Spleen (tissue), 13 donors: ENCODE measurements at regions of chr12 and their contacts with region 1.

Region 1: GRCh38 chr12:56189176-56189917 is at the start of gene SMARCC2:
- DNase-seq: peak; percentile 97
- H3K4me3 ChIP-seq: peak within 1 kb of the TSS; percentile 57 to 94 (median 84)
- H3K27ac ChIP-seq: peak within 1 kb of the TSS; percentile 85 to 96 (median 94)
- H3K4me1 ChIP-seq: peaks cover 22 to 58% (median 35%) of the 10 kb centered on the region in 6 donors
- H3K27me3 ChIP-seq: no peaks in the 10 kb centered on the region
- CTCF ChIP-seq: peak; percentile 19 to 92 (median 80)
- POLR2A ChIP-seq: no peak
- total RNA-seq, gene SMARCC2: 73.7 to 121 (median 101) TPM

Region 2: DNA sequence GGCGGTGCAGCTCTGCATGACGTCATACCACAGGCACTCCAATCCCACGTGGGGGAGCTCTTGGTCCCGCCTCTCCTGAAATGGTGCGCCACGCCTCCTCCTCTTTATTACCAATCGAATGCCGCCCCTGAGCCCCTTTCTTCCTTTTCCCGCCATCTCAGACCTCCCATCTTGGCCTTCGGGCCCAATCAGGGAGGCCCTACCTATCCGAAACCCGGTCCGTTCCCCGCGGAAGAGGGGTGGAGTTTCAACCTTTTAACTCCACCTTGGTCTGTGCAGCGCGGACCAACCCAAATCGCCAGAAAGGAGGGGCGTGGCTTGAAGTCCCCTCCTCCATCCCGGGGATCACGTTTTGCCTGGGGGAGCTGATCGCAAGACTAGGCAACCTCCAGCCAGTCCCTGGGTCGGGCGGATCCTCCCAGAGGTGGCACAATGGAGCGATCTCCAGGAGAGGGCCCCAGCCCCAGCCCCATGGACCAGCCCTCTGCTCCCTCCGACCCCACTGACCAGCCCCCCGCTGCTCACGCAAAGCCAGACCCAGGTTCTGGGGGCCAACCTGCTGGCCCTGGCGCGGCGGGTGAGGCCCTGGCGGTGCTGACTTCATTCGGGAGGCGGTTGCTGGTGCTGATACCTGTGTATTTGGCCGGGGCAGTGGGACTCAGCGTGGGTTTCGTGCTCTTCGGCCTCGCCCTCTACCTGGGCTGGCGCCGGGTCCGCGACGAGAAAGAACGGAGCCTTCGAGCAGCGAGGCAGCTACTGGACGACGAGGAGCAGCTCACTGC is 61.3 kb before region 1 on chr12 and contains the start of gene ESYT1:
- intact Hi-C with region 1: loop called (anchors 2 kb)
- DNase-seq: peak; percentile 99
- H3K4me3 ChIP-seq: peak within 1 kb of the TSS; percentile 50 to 94 (median 79)
- H3K27ac ChIP-seq: peak within 1 kb of the TSS; percentile 82 to 94 (median 90)
- H3K4me1 ChIP-seq: peaks cover 37 to 92% (median 61%) of the 10 kb centered on the region in 6 donors
- H3K27me3 ChIP-seq: no peaks in the 10 kb centered on the region
- CTCF ChIP-seq: peak in 4 of 11 experiments; percentile 6 to 57 (median 32)
- POLR2A ChIP-seq: peak in 2 of 3 donors; percentile 56 to 95
- total RNA-seq, gene ESYT1: 89.0 to 112 (median 107) TPM

Region 3: DNA sequence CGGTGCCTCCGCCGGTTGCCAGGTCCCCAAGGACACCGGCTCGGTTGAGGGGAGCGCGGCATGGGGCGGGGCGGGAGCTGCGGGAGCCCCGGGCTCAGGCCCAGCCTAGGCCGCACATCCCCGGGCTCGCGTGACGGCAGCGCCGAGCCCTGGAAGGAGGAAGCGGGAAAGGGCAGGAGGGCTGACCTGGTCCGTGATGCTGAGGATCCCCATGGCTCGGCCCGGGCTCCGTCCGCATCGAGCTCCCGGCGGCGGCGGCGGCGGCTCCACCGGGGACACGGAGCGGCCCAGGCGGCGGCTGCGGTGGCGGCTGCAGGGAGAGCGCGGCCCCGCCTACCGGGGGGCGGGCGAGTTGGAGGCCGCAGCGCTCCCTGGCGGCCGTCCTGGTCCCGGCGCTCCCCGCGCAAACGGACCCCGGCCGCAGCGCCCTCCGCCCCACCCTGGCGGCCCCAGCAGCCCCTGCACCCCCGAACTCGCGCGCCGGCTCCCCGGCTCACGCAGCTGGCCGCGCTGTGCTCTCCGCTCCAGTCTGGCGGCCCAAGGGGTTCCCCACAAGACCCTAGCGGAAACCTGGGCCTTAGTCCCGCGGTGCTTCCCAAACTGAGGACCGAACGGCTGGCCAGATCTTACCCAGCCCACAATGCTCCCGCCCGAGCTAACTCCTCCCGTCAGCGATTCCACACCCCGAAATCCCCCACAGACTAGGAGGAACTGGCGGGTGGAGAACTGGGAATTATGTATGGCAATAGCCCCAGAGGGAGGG is 68.9 kb after region 1 on chr12 and contains the start of gene ANKRD52:
- intact Hi-C with region 1: loop called (anchors 10 kb)
- DNase-seq: peak; percentile 95
- H3K4me3 ChIP-seq: peak within 1 kb of the TSS; percentile 77 to 97 (median 82)
- H3K27ac ChIP-seq: peak within 1 kb of the TSS; percentile 78 to 91 (median 86)
- H3K4me1 ChIP-seq: peaks cover 20 to 35% (median 29%) of the 10 kb centered on the region in 6 donors
- H3K27me3 ChIP-seq: no peaks in the 10 kb centered on the region
- CTCF ChIP-seq: peak in 10 of 11 experiments; percentile 36 to 93 (median 85)
- POLR2A ChIP-seq: peak in 1 of 3 donors; percentile 18
- total RNA-seq, gene ANKRD52: 16.6 to 35.2 (median 27.5) TPM

Region 4: DNA sequence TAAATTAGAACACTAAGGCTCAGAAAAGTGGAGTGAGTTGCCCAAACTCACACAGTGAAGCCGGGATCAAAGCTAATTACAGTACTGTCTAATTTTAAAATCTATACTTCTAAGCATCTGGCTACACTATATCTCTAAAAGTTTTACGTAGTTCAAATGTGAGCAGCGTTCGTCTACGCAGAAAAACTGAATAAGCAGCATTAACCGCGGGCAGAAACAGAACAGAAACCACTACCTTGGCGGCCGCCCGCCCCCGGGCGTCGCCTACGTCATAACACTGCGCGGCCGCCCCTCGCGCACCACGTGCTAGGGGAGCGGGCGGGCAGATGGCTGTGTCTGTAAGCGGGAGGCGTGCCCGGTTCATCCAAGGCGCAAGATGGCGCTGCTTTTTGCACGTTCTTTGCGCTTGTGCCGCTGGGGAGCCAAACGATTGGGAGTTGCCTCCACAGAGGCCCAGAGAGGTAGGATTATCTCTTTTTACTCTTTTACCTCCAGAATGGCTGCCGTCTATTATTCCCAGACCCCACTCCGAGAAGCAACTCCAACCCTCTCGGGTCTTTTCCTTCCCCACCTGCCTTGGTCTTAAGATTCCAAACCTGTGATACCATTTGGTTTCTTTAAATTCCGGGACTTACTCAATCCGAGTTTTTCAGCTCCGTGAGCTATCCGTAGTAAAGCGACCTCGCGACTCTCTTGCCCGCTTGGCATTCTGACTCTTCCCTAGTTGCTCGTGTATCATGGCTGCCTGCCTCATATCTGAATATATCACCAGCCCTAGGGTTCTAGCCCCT is 279.1 kb after region 1 on chr12 and contains the start of gene SPRYD4:
- intact Hi-C with region 1: no loop called
- DNase-seq: peak; percentile 98
- H3K4me3 ChIP-seq: peak within 1 kb of the TSS; percentile 64 to 97 (median 78)
- H3K27ac ChIP-seq: peak within 1 kb of the TSS; percentile 87 to 98 (median 93)
- H3K4me1 ChIP-seq: peaks cover 16 to 59% (median 41%) of the 10 kb centered on the region in 6 donors
- H3K27me3 ChIP-seq: no peaks in the 10 kb centered on the region
- CTCF ChIP-seq: peak in 9 of 11 experiments; percentile 18 to 71 (median 45)
- POLR2A ChIP-seq: peak; percentile 54 to 96 (median 69)
- total RNA-seq, gene SPRYD4: 2.8 to 4.9 (median 4.2) TPM